T-cell (primary cell): ENCODE measurements at regions of chr4 and their contacts with region 1.

Region 1: GRCh38 chr4:47933840-47934239 is 19.5 kb upstream of the NFXL1 start:
- DNase-seq: peak in 1 of 35 experiments; percentile 72
- ATAC-seq: peak in 3 of 4 experiments; percentile 29 to 65 (median 64)
- H3K4me3 ChIP-seq: no peak overlapping the region
- H3K4me3 Mint-ChIP-seq: no peak overlapping the region
- H3K27ac ChIP-seq: no peak overlapping the region
- H3K27ac Mint-ChIP-seq: no peak overlapping the region
- H3K4me1 ChIP-seq: no peaks in the 10 kb centered on the region
- H3K4me1 Mint-ChIP-seq: peaks cover 0 to 5% (median 2%) of the 10 kb centered on the region in 3 donors
- H3K27me3 ChIP-seq: no peaks in the 10 kb centered on the region
- H3K27me3 Mint-ChIP-seq: peaks cover 0 to 5% of the 10 kb centered on the region in 2 donors

Region 2: DNA sequence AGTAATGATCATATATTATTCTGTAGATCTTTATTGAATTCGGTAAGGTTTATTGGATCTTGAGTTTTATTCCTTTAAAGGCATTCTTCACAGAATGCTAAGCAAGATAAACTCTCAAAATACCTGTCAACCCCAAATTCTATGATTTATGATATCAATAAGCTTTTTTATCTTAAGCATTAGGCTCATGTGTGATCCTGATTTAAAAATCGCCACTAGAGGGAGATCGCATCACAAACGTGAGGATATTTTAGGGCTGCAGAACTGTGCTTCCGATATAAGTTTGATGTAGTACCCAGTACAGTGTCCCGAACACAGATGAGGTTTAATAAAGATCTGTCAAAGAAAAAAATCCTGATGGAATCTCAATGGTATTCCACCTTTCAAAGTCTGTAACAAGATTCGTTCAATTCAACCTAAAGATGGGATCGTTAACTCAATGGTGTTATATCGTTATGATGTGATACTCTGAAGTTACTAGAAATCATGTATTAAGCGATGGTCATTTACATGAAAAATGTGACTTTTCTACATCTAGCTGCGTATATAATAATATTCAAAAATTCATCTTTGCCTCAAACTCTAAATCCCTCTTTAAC is 264.9 kb before region 1 on chr4:
- CTCF ChIA-PET with region 1: interaction called, 3 to 35 read pairs
- POLR2A ChIA-PET with region 1: no interaction called
- DNase-seq: peak in 7 of 35 experiments; percentile 2 to 66 (median 5)
- ATAC-seq: peak in 2 of 4 experiments; percentile 58 to 61
- H3K4me3 ChIP-seq: no peak overlapping the region
- H3K4me3 Mint-ChIP-seq: no peak overlapping the region
- H3K27ac ChIP-seq: no peak overlapping the region
- H3K27ac Mint-ChIP-seq: no peak overlapping the region
- H3K4me1 ChIP-seq: no peaks in the 10 kb centered on the region
- H3K4me1 Mint-ChIP-seq: peaks cover 0 to 1% (median 0%) of the 10 kb centered on the region in 3 donors
- H3K27me3 ChIP-seq: no peaks in the 10 kb centered on the region
- H3K27me3 Mint-ChIP-seq: peaks cover 10 to 21% of the 10 kb centered on the region in 2 donors

Region 3: DNA sequence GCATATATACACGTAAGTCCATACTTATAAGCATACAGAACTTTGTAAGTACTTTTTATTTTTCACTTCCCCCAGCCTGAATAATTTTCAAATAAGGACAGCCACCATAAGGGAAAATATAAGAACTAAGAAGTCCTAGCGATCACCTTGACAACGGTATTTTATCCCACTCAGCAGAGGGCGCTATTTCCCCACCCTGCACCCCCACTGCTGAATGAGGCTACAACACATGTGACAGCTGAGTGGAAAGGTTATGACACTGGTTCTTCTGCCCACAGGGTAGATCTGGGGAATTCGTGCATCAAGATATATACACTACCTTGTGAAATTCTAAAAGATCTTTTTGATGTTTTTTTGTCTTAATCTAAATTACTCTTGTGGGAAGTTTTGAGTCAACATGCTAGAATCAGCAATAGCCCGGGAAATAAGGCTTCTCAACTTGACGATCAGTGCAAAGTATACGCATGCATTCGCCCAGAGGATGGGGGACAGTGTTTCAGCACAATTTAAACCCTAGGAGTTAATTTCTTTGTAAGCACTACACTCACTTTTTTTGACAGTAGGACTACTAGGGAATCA is 247.5 kb before region 1 on chr4:
- CTCF ChIA-PET with region 1: interaction called, 4 to 29 read pairs
- POLR2A ChIA-PET with region 1: no interaction called
- DNase-seq: peak; percentile 8 to 75 (median 42)
- ATAC-seq: peak in 3 of 4 experiments; percentile 60 to 77 (median 73)
- H3K4me3 ChIP-seq: no peak overlapping the region
- H3K4me3 Mint-ChIP-seq: no peak overlapping the region
- H3K27ac ChIP-seq: no peak overlapping the region
- H3K27ac Mint-ChIP-seq: no peak overlapping the region
- H3K4me1 ChIP-seq: no peaks in the 10 kb centered on the region
- H3K4me1 Mint-ChIP-seq: no peaks in the 10 kb centered on the region
- H3K27me3 ChIP-seq: no peaks in the 10 kb centered on the region
- H3K27me3 Mint-ChIP-seq: peaks cover 11 to 13% of the 10 kb centered on the region in 2 donors